ENCODE measurements at regions of chr16 and their contacts with region 1.

Region 1: GRCh38 chr16:4183237-4184036 is 58.4 kb downstream of the SRL start:
- DNase-seq: peak; percentile 82
- ATAC-seq: peak; percentile 90
- H3K4me3 ChIP-seq: peak overlapping the region; percentile 59 to 79
- H3K27ac ChIP-seq: peak overlapping the region; percentile 95
- H3K4me1 ChIP-seq: peaks cover 9 to 37% of the 10 kb centered on the region in 2 experiments
- H3K27me3 ChIP-seq: no peaks in the 10 kb centered on the region
- CTCF ChIP-seq: no peak
- POLR2A ChIP-seq: peak; percentile 72
- RAD21 ChIP-seq: no peak

Region 2: DNA sequence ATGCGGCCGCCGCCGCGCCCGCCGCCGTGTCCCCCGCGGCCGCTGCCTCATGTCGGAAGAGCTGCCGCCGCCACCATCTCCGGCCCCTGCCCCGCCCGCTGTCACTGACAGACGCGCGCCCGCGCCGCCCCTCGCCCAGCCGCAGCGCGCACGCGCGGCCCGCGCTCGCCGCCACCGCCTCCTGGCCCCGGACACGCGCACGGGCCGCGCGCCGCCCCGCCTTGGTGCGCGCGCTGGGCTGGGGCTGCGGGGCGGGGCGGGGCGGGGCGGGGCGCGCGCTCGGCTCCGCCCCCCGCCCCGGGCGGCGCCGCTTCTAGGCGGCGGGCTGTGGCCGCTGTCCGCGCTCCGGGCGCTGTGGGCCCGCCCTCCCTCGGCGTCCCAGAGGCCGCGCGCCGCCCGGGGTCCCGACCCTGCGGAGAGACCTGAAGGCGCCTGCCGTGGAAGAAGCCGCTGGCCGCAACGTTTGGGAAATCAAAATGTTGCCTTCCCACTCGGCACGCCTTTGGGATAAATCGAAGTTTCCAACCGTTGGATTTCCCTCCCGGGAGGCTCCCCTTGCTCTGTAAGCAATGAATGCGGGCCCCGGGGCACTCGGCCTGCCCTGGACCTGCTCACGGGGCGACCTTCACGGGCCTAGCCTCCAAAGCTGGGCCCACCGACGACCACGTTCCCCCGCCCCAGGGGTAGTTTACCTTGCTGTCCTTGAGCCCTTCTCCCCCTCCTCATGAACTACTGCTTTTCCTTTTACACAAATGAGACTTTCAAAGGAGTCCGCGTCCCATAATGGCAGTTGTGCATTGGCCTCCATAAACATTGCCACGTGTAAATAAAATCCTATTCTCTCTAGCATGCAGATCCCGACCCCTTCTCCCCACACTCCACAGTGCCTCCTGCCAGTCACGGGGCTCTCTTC is 66.8 kb before region 1 on chr16 and contains the start of gene ADCY9:
- CTCF ChIA-PET with region 1: no interaction called
- POLR2A ChIA-PET with region 1: no interaction called
- RAD21 ChIA-PET with region 1: no interaction called
- intact Hi-C with region 1: loop called (anchors 2 kb)
- DNase-seq: peak; percentile 16
- ATAC-seq: peak; percentile 90
- H3K4me3 ChIP-seq: peak within 1 kb of the TSS; percentile 62 to 72
- H3K27ac ChIP-seq: peak within 1 kb of the TSS; percentile 80
- H3K4me1 ChIP-seq: peaks cover 6 to 9% of the 10 kb centered on the region in 2 experiments
- H3K27me3 ChIP-seq: no peaks in the 10 kb centered on the region
- CTCF ChIP-seq: peak in 1 of 3 experiments; percentile 10; a peak in 1 of 6 replicates
- POLR2A ChIP-seq: peak; percentile 61
- RAD21 ChIP-seq: no peak
- total RNA-seq, gene ADCY9: 9.8 TPM